ENCODE measurements at regions of chr3 and their contacts with region 1.

Region 1: GRCh38 chr3:134754768-134755559 is 40.1 kb upstream of the EPHB1 start:
- DNase-seq: peak; percentile 79
- H3K4me3 Mint-ChIP-seq: no peak overlapping the region
- H3K27ac Mint-ChIP-seq: no peak overlapping the region
- H3K4me1 Mint-ChIP-seq: no peaks in the 10 kb centered on the region
- H3K27me3 Mint-ChIP-seq: peaks cover 71% of the 10 kb centered on the region
- CTCF ChIP-seq: peak; percentile 85

Region 2: GRCh38 chr3:134650431-134651346 is 104.3 kb before region 1 on chr3 and contains the start of gene KY:
- CTCF ChIA-PET with region 1: no interaction called
- intact Hi-C with region 1: loop called (anchors 10 kb)
- DNase-seq: peak; percentile 67
- H3K4me3 Mint-ChIP-seq: peak within 1 kb of the TSS; percentile 60
- H3K27ac Mint-ChIP-seq: no peak within 1 kb of the TSS
- H3K4me1 Mint-ChIP-seq: no peaks in the 10 kb centered on the region
- H3K27me3 Mint-ChIP-seq: peaks cover 100% of the 10 kb centered on the region
- CTCF ChIP-seq: peak; percentile 22
- total RNA-seq, gene KY: 0.15 TPM in 1 of 2 replicates, not detected in the other

Region 3: GRCh38 chr3:134838599-134838998 is 83.6 kb after region 1 on chr3:
- CTCF ChIA-PET with region 1: no interaction called
- intact Hi-C with region 1: no loop called
- DNase-seq: no peak
- H3K4me3 Mint-ChIP-seq: no peak overlapping the region
- H3K27ac Mint-ChIP-seq: no peak overlapping the region
- H3K4me1 Mint-ChIP-seq: no peaks in the 10 kb centered on the region
- H3K27me3 Mint-ChIP-seq: peaks cover 9% of the 10 kb centered on the region
- CTCF ChIP-seq: peak; percentile 48